Sciatic nerve (tissue), 2 donors: ENCODE measurements at regions of chr13 and their contacts with region 1.

Region 1: DNA sequence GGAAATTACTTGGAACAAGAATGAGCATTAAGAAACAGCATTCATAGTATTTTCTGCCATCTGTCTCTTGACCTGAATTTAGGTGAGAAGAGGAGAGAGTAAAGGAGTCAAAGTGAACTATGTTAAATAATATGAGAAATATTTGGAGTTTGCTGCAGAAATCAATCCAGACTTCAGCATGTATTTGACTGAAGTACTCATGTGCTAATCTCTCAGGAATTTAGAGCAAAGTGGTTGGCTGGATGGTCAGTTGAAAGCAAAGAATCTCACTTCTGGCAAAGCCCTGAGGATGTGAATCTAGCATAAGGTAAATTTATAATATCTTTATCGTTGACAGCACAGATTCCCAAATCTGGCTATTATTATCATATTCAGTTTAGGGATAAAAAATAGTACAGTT is 394.3 kb downstream of the PCDH17 start:
- DNase-seq: no peak
- ATAC-seq: no peak

Region 2: GRCh38 chr13:57302604-57303003 is 723.2 kb before region 1 on chr13:
- intact Hi-C with region 1: loop called (anchors 5 kb)
- DNase-seq: no peak
- ATAC-seq: no peak